Aorta (tissue), 5 donors: ENCODE measurements at regions of chr15 and their contacts with region 1.

Region 1: DNA sequence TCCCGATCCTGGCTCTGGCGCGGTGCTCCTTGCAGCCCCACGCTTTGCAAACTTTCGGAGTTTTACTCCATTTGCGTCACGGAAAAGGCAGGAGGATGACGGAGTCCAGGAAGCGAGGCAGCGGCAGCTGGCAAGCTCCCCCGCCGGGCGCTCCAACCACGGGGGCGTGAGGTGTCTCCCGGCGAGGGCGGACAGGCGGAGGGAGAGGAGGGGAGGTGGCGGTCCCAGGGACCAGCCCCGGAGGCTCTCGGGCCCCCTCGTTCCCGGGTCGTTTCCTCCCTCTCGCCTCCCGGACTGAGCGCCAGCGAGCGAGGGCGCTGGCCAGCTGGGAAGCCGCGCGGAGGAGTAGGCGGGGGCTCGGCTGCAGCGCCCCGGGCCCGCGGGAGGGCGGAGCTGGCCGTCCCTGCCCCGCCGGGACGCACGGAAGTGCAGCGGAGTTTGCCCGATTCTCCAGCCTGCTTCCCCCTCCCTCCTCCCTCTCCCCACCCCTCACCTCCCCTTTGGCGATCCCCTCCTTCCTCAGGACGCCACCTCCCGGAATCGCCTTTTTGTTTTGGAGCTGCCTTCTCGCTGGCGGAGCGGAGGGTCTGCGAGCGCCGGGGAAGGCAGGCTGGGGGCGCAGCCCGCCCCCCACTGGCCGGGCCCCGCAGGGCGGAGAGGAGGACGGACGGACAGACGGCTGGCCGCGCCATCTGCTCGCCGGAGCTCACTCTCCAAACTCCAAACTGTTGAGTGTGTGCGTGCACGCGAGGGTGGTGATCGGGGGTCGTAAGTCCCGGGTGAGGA is at the start of gene SNX33:
- DNase-seq: peak; percentile 92 to 95
- ATAC-seq: peak; percentile 92
- H3K4me3 ChIP-seq: peak within 1 kb of the TSS; percentile 77 to 79
- H3K27ac ChIP-seq: peak within 1 kb of the TSS; percentile 87 to 97
- H3K4me1 ChIP-seq: no peaks in the 10 kb centered on the region
- H3K27me3 ChIP-seq: no peaks in the 10 kb centered on the region
- total RNA-seq, gene SNX33: 30.9 to 59.5 TPM

Region 2: GRCh38 chr15:75661091-75661777 is 13.7 kb after region 1 on chr15:
- intact Hi-C with region 1: loop called in 1 of 2 experiments (anchors 2 kb)
- DNase-seq: peak; percentile 96 to 98
- ATAC-seq: peak; percentile 93
- H3K4me3 ChIP-seq: no peak overlapping the region
- H3K27ac ChIP-seq: peak overlapping the region; percentile 65 to 98
- H3K4me1 ChIP-seq: peaks cover 0 to 6% of the 10 kb centered on the region in 2 donors
- H3K27me3 ChIP-seq: no peaks in the 10 kb centered on the region

Region 3: DNA sequence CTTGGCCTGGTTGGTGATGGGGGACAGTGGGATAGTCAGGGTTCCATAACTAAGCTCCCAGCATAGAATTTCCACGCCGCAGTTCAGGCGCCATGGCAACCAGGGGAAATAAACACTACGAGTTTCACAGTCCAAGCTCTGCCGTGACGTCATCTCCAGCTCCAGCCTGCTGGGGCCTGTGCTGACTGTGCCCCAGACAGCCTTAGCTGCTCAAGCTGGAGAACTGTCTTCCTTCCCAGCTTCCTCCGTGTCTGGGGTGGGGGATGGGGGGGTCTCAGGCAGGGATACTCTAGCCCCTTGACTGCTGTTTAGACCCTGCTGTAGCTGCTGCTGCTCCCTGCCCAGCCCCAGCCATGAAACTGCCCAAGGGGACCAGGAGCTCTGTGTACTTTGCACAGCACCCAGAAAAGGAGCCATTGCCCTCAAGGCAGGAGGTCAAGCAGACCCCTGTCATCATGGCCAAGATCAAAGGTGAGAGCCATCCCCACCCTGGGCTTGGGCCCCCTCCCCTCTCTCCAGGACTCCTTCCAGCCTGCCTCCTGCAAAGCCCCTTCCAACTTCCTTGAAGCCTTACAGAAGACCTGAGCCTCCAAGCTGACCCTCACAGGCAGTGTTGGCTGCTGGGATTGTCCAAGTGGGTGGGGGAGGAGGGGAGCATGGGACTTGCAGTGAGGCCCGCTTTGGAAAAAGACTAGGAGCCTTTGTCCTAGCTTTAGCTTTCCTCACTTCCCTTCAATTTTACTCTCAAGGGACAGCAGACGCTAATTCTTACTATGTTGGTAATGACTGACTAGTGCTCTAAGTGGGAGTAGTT is 76.5 kb after region 1 on chr15:
- intact Hi-C with region 1: no loop called
- DNase-seq: peak; percentile 96
- ATAC-seq: peak; percentile 94
- H3K4me3 ChIP-seq: no peak overlapping the region
- H3K27ac ChIP-seq: peak overlapping the region in 1 of 2 donors; percentile 78
- H3K4me1 ChIP-seq: no peaks in the 10 kb centered on the region
- H3K27me3 ChIP-seq: no peaks in the 10 kb centered on the region